GM10248 (cell line): ENCODE measurements at regions of chr19 and their contacts with region 1.

Region 1: DNA sequence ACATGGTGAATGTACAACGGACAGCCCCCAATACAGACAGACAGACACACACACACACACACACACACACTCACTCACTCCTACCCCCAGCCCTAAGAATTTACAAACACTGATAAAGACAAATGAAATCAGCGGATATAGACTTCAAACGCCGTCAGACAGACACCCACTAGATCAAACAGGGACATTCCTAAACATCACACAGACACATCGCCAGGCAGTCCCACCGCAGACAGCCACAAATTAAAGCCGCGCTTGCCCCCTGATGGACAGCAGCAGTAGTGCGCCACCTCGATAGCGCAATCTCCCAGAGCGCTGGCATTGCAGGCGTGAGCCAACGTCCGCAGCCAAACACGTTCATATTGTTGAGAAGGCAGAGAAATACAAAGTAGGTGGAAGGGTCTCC is 24.7 kb upstream of the ADGRE1 start:
- DNase-seq: peak; percentile 87
- CTCF ChIP-seq: peak; percentile 97

Region 2: DNA sequence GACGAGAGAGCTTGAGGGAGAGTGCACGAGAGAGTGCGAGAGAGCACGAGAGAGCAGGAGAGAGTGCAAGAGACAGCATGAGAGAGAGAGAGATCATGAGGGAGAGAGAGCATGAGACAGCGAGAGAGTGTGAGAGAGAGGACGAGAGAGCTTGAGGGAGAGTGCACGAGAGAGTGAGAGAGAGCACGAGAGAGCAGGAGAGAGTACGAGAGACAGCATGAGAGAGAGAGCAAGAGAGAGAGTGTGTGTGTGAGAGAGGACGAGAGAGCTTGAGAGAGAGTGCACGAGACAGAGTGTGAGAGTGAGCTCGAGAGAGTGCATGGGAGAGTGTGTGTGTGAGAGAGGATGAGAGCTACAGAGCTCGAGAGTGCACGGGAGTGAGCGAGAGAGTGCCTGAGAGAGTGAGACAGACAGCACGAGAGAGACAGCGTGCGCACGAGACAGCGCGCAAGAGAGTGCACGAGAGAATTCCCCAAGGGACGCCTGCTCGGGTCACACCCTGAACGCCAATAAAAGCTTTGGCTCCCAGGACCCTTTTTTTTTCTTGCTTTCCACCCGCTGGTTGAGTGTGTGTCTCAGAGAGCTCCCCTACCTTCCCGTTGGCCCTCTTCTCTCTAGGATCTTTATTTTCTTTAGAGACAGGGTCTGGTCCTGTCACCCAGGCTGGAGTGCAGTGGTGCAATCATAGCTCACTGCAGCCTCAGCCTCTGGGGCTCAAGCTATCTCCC is 275.4 kb before region 1 on chr19:
- CTCF ChIA-PET with region 1: interaction called, 10 read pairs
- POLR2A ChIA-PET with region 1: no interaction called
- DNase-seq: peak; percentile 42
- CTCF ChIP-seq: no peak

Region 3: DNA sequence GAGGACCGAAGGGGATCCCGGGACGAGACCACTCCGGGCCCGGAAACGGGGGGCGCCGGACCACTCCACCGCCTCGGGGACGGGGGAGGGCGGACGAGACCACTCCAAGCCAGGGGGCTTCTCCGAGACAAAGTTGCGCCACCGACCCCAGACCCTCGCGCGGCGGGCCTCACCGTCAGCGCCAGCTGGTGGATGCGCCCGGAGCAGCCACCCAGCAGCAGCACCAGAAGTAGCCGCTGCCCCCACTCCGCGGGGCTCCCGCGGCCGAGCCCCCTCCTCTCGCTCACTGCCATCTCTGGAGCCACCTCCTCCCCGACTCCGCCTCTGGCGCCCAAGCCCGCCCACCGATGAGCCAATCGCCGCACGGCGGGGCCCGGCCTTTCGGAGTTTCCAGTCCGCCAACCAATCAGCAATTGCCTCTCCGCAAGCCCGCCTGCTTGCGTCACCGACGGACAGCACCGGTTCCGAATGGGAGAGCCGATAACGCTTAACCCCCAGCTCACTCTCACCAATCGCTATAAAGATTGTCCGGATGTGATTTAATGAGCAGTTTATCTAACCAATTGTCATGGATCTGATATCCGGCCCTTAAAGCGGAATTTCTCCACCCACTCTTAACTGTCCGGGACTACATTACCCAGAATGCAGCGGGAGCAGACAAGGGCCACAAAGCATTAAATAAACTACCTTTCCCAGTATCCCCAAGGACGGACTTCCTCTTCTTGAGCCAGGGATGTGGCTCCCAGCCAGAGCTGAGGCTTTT is 125.2 kb before region 1 on chr19 and contains the start of gene GPR108:
- CTCF ChIA-PET with region 1: interaction called, 124 read pairs
- POLR2A ChIA-PET with region 1: interaction called, 3 read pairs
- DNase-seq: peak; percentile 98
- CTCF ChIP-seq: no peak

Region 4: DNA sequence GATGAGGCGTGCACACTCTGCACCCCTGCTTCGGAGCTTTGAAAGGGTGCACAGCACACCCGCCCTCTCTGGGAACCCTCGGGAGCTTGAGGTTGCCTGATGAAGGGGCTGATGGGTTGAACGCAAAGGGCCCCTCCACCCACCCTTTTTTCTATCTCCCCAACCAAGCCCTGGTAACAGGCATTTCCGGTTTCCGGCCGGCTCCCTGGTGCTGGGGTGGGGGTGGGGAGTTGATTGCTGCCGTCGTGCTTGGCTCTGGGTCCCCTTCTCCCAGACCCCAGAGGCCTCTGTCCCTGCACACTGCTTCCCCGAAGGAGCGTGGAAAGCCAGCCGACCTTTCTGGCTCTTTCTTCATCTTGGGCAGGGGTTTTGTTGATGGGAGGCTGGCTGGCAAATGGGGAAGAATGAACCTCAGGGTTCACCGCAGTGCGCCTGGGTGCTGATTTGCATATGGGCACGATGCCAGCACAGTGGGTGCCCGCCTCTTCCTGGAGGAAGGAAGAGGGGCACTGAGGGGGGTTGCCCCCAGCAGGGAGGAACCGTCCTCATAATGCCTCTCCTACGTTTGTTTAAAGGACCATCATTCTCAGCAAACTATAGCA is 61.1 kb before region 1 on chr19:
- CTCF ChIA-PET with region 1: interaction called, 21 read pairs
- POLR2A ChIA-PET with region 1: no interaction called
- DNase-seq: peak; percentile 78
- CTCF ChIP-seq: no peak

Region 5: DNA sequence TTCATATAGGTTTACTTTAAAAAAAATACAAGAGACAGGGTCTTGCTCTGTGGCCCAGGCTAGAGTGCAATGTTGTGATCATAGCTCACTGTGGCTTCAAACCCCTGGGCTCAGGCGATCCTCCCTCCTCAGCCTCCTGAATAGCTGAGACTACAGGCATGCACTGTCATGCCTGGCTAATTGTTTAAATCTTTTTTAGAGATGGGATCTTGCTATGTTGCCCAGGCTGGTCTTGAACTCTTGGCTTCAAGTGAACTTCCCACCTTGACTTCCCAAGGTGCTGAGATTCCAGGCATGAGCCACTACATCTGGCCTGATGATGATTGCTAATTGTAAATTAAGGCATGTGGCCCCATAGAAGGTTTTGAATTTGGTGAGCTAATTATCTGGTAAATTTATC is 10.7 kb before region 1 on chr19:
- CTCF ChIA-PET with region 1: interaction called, 15 read pairs
- POLR2A ChIA-PET with region 1: no interaction called
- DNase-seq: no peak
- CTCF ChIP-seq: no peak